ENCODE measurements at regions of chr2 and their contacts with region 1.

Region 1: GRCh38 chr2:108621087-108621559 is 86.9 kb downstream of the LIMS1 start:
- DNase-seq: peak; percentile 32 to 80 (median 75)
- ATAC-seq: peak; percentile 97
- H3K4me3 ChIP-seq: peak overlapping the region; percentile 59
- H3K4me3 Mint-ChIP-seq: peak overlapping the region; percentile 87 to 96 (median 91)
- H3K27ac ChIP-seq: peak overlapping the region; percentile 74
- H3K27ac Mint-ChIP-seq: peak overlapping the region; percentile 91 to 97 (median 94)
- H3K4me1 ChIP-seq: peaks cover 36 to 64% of the 10 kb centered on the region in 2 donors
- H3K4me1 Mint-ChIP-seq: peaks cover 44 to 93% (median 84%) of the 10 kb centered on the region in 7 donors
- H3K27me3 ChIP-seq: no peaks in the 10 kb centered on the region
- H3K27me3 Mint-ChIP-seq: no peaks in the 10 kb centered on the region

Region 2: GRCh38 chr2:108565778-108566375 is 55.2 kb before region 1 on chr2:
- CTCF ChIA-PET with region 1: no interaction called
- POLR2A ChIA-PET with region 1: no interaction called
- intact Hi-C with region 1: no loop called
- DNase-seq: no peak
- ATAC-seq: peak; percentile 80
- H3K4me3 ChIP-seq: no peak overlapping the region
- H3K4me3 Mint-ChIP-seq: peak overlapping the region in 5 of 10 donors; percentile 7 to 69 (median 32)
- H3K27ac ChIP-seq: no peak overlapping the region
- H3K27ac Mint-ChIP-seq: peak overlapping the region in 2 of 9 donors; percentile 55 to 69
- H3K4me1 ChIP-seq: no peaks in the 10 kb centered on the region
- H3K4me1 Mint-ChIP-seq: peaks cover 0 to 32% (median 5%) of the 10 kb centered on the region in 7 donors
- H3K27me3 ChIP-seq: no peaks in the 10 kb centered on the region
- H3K27me3 Mint-ChIP-seq: no peaks in the 10 kb centered on the region

Region 3: GRCh38 chr2:108719149-108720044 is 98.3 kb after region 1 on chr2 and contains the start of gene RANBP2:
- CTCF ChIA-PET with region 1: interaction called, 7 read pairs
- POLR2A ChIA-PET with region 1: interaction called, 4 read pairs
- intact Hi-C with region 1: loop called in 1 of 2 experiments (anchors 5 kb)
- DNase-seq: peak; percentile 86 to 95 (median 93)
- ATAC-seq: peak; percentile 98
- H3K4me3 ChIP-seq: peak within 1 kb of the TSS; percentile 97
- H3K4me3 Mint-ChIP-seq: peak within 1 kb of the TSS; percentile 94 to 98 (median 97)
- H3K27ac ChIP-seq: peak within 1 kb of the TSS; percentile 96
- H3K27ac Mint-ChIP-seq: peak within 1 kb of the TSS; percentile 97 to 99 (median 99)
- H3K4me1 ChIP-seq: peaks cover 5 to 6% of the 10 kb centered on the region in 2 donors
- H3K4me1 Mint-ChIP-seq: peaks cover 14 to 43% (median 31%) of the 10 kb centered on the region in 7 donors
- H3K27me3 ChIP-seq: no peaks in the 10 kb centered on the region
- H3K27me3 Mint-ChIP-seq: no peaks in the 10 kb centered on the region
- total RNA-seq, gene RANBP2: 63.4 to 118 (median 88.6) TPM

Region 4: DNA sequence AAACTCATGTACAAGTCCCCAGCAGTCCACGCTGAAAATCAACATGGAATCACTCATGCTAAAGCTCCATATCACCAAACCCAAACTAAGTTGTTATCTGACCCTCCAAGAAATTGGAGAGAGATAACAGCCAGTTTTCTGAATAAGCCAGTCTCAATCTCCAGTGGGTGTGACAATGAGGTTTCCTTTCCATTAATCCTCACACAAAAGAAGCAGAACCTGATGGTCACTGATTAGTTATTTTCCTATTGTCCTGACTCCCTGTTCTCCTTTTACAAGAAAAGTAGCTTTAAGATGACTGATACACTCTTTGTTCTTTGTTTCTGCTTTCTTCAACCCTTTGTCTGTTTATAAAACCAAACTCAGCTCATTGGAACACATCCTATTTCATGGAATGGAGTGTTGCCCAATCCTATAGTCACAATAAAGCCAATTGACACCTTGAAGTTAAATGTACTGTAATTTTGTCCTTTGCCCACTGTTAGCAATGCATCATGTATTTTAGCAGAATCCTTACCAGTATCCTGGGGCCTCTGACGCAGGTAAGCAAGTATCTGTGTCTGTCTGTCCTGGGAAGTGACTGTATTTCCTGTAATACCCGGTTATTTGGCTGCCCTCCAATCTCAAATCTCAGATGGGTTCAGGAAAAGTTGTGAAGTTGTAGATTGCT is 477.3 kb after region 1 on chr2:
- CTCF ChIA-PET with region 1: no interaction called
- POLR2A ChIA-PET with region 1: no interaction called
- intact Hi-C with region 1: no loop called
- DNase-seq: no peak
- ATAC-seq: no peak
- H3K4me3 ChIP-seq: no peak overlapping the region
- H3K4me3 Mint-ChIP-seq: no peak overlapping the region
- H3K27ac ChIP-seq: no peak overlapping the region
- H3K27ac Mint-ChIP-seq: peak overlapping the region in 2 of 9 donors; percentile 13 to 78
- H3K4me1 ChIP-seq: peaks cover 0 to 11% of the 10 kb centered on the region in 2 donors
- H3K4me1 Mint-ChIP-seq: peaks cover 4 to 33% (median 28%) of the 10 kb centered on the region in 7 donors
- H3K27me3 ChIP-seq: no peaks in the 10 kb centered on the region
- H3K27me3 Mint-ChIP-seq: peaks cover 0 to 20% (median 0%) of the 10 kb centered on the region in 5 donors

Measured in naive thymus-derived CD4-positive, alpha-beta T cell (primary cell).